ENCODE measurements at regions of chr19 and their contacts with region 1.

Region 1: DNA sequence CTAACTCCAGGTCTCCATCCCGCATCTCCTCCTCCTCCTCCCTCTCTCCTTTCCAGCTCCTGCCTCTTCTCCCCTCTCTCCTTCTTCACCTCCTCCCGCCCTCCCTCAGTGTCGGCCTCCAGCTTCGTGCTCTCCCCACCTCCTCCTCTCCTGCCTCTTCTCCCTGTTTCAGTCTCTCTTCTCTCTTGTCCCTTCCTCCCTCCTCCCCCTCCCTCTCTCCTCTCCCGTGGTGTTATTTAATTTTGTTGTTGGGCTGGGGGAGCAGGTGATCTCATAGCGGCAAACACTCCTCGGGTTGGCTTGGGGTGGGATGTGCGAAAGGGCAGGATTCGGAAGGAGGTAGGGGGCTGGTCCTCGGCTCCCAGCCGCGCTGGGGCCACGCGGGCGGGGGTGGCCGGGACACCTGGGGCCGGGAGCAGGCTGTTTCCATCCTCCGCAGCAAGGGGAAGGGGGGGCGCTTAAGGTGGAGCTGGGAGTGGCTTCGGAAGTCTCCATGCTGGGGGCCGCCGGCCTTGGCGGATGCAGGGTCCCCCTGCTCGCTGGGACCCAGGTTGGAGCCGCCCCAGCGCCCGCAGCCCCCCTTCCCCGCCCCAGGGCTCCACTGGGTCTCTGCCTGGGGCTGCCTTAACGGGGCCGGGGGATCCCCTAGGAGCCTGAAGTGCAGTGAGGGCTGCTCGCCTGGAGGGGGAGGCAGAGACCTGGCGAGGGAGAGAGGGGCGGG is at the start of gene CA11:
- DNase-seq: peak; percentile 87 to 94 (median 94)
- H3K4me3 ChIP-seq: peak within 1 kb of the TSS; percentile 47 to 82 (median 59)
- H3K27ac ChIP-seq: peak within 1 kb of the TSS in 1 of 2 experiments; percentile 61
- H3K4me1 ChIP-seq: peaks cover 3 to 27% (median 22%) of the 10 kb centered on the region in 4 experiments
- H3K27me3 ChIP-seq: no peaks in the 10 kb centered on the region

Region 2: DNA sequence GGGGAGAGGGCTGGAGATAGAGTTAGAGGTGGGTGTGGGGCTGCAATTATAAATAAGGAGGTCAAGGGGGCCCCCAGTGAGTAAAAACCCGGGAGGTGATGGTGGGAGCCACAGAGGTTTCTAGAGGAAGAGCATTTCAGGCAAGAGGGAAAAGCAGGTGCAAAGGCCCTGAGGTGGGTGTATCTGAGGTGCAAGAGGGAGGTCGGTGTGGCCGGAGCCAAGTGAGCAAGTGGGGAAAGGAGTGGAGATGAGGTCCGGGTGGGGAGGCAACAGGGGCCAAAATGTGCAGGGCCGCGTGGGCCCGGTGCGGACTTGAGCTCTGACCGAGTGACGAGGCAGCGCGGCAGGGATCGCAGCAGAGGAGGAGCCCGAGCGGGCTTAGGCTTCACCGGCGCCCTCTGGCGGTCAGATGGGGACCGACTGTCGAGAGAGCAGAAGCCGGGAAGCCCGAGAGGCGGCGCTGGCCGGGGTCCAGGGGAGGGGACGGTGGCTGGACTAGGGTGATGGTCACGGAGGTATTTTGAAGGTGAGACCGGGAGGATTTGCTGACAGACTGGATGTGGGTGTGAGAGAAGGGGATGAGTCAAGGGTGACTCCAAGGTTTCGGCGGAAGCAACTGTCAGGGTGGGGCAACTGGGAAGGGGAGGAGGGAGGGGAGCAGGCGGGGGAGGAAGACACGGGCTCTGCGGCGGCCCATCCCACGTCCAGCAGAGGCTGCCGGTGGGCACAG is 57.3 kb before region 1 on chr19:
- CTCF ChIA-PET with region 1: no interaction called
- POLR2A ChIA-PET with region 1: no interaction called
- DNase-seq: peak; percentile 81 to 88 (median 85)
- H3K4me3 ChIP-seq: peak overlapping the region; percentile 13 to 77 (median 48)
- H3K27ac ChIP-seq: no peak overlapping the region
- H3K4me1 ChIP-seq: peaks cover 0 to 10% (median 6%) of the 10 kb centered on the region in 4 experiments
- H3K27me3 ChIP-seq: peaks cover 0 to 1% (median 0%) of the 10 kb centered on the region in 5 experiments

Region 3: GRCh38 chr19:48618916-48619691 is 27.1 kb before region 1 on chr19 and contains the starts of genes RPL18 and SPHK2:
- CTCF ChIA-PET with region 1: no interaction called
- POLR2A ChIA-PET with region 1: no interaction called
- DNase-seq: peak; percentile 100
- H3K4me3 ChIP-seq: peak within 1 kb of the TSS; percentile 83 to 100 (median 97)
- H3K27ac ChIP-seq: peak within 1 kb of the TSS; percentile 87 to 98
- H3K4me1 ChIP-seq: peaks cover 7 to 45% (median 35%) of the 10 kb centered on the region in 4 experiments
- H3K27me3 ChIP-seq: no peaks in the 10 kb centered on the region

Region 4: GRCh38 chr19:48634424-48635197 is 11.6 kb before region 1 on chr19:
- CTCF ChIA-PET with region 1: interaction called, 13 read pairs
- POLR2A ChIA-PET with region 1: interaction called, 5 read pairs
- DNase-seq: peak; percentile 93 to 97 (median 96)
- H3K4me3 ChIP-seq: peak overlapping the region in 6 of 7 experiments; percentile 27 to 83 (median 76)
- H3K27ac ChIP-seq: peak overlapping the region; percentile 77 to 88
- H3K4me1 ChIP-seq: peaks cover 13 to 70% (median 61%) of the 10 kb centered on the region in 4 experiments
- H3K27me3 ChIP-seq: no peaks in the 10 kb centered on the region

Measured in common myeloid progenitor, CD34-positive (primary cell).